ENCODE measurements at regions of chrX and their contacts with region 1.

Region 1: GRCh38 chrX:74550295-74550802 is 64.1 kb downstream of the RLIM start:
- DNase-seq: peak; percentile 67
- ATAC-seq: peak; percentile 97
- H3K4me3 ChIP-seq: peak overlapping the region; percentile 38; the same call in 1 of the 2 replicates
- H3K27ac ChIP-seq: no peak overlapping the region
- H3K4me1 ChIP-seq: no peaks in the 10 kb centered on the region
- H3K27me3 ChIP-seq: no peaks in the 10 kb centered on the region; the same call in 1 of the 2 replicates
- CTCF ChIP-seq: peak; percentile 99
- POLR2A ChIP-seq: no peak
- RAD21 ChIP-seq: peak; percentile 95

Region 2: GRCh38 chrX:74133156-74133796 is 417.1 kb before region 1 on chrX:
- CTCF ChIA-PET with region 1: no interaction called
- POLR2A ChIA-PET with region 1: no interaction called
- dilution Hi-C with region 1: no loop called
- in situ Hi-C with region 1: no loop called
- intact Hi-C with region 1: loop called (anchors 2 kb)
- DNase-seq: peak; percentile 80
- ATAC-seq: peak; percentile 99
- H3K4me3 ChIP-seq: no peak overlapping the region
- H3K27ac ChIP-seq: no peak overlapping the region
- H3K4me1 ChIP-seq: no peaks in the 10 kb centered on the region
- H3K27me3 ChIP-seq: peaks cover 2% of the 10 kb centered on the region; the same call in 1 of the 2 replicates
- CTCF ChIP-seq: peak; percentile 88
- POLR2A ChIP-seq: no peak
- RAD21 ChIP-seq: peak; percentile 89

Region 3: DNA sequence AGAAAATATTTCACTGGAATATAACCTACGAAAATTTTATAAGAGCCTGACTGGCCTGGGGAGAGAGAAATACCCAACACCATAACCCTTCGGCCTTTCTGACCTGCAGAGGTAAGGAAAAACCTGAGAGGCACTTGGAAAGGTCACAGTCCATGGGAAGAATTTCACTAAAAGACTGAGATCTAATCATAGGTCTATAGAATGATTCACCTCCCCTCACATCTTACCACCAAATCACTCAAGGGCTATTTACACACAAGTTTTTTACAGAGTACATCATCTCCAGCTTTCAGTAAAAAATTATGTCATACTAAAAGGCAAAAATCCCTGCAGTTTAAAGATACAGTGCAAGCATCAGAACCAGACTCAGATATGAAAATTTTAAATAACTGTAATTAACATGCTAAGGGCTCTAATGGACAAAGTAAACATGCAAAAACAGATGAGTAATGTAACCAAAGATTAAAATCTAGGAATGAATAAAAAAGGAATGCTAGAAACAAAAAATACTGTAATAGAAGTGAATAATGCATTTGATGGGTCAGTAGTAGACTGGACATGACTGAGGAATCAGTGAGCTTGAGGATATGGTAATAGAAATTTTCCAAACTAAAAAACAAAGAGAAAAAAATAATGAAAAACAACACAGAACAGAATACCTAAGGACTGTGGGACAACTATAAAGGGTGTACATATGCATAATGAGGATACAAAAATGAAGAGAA is 161.2 kb before region 1 on chrX:
- CTCF ChIA-PET with region 1: interaction called, 3 read pairs
- POLR2A ChIA-PET with region 1: no interaction called
- dilution Hi-C with region 1: no loop called
- in situ Hi-C with region 1: loop called (anchors 5 kb)
- intact Hi-C with region 1: no loop called
- DNase-seq: no peak
- ATAC-seq: no peak
- H3K4me3 ChIP-seq: no peak overlapping the region
- H3K27ac ChIP-seq: no peak overlapping the region
- H3K4me1 ChIP-seq: no peaks in the 10 kb centered on the region
- H3K27me3 ChIP-seq: peaks cover 2% of the 10 kb centered on the region; the same call in 1 of the 2 replicates
- CTCF ChIP-seq: no peak
- POLR2A ChIP-seq: no peak
- RAD21 ChIP-seq: no peak

Region 4: GRCh38 chrX:75603833-75604232 is 1053.5 kb after region 1 on chrX:
- CTCF ChIA-PET with region 1: no interaction called
- POLR2A ChIA-PET with region 1: no interaction called
- dilution Hi-C with region 1: no loop called
- in situ Hi-C with region 1: no loop called
- intact Hi-C with region 1: loop called (anchors 10 kb)
- DNase-seq: peak; percentile 28
- ATAC-seq: peak; percentile 64; the same call in 1 of the 2 replicates
- H3K4me3 ChIP-seq: no peak overlapping the region
- H3K27ac ChIP-seq: no peak overlapping the region
- H3K4me1 ChIP-seq: no peaks in the 10 kb centered on the region
- H3K27me3 ChIP-seq: no peaks in the 10 kb centered on the region
- CTCF ChIP-seq: peak; percentile 52
- POLR2A ChIP-seq: no peak
- RAD21 ChIP-seq: peak; percentile 60

Measured in IMR-90 (cell line).